ENCODE measurements at regions of chr20 and their contacts with region 1.

Region 1: DNA sequence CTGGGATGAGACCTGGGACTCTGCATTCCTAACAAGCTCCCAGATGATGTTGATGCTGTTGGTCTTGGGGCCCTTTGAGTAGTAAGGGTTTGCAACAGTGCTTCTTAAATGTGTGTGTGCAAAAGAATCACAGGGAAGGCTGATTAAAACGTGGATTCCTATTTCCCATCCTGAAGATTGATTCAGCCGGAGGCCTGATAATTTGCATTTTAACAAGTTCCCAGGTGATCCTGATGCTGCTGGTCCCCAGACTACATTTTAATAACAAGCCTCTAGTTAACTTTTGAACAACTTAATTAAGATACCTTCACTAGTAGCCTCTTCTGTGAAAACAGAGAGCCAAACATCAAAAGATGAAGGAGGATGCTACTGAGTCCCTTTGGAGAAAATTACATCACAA is 156.4 kb upstream of the LAMP5 start:
- DNase-seq: no peak
- H3K27ac ChIP-seq: no peak overlapping the region
- CTCF ChIP-seq: no peak

Region 2: GRCh38 chr20:8853805-8854338 is 504.1 kb before region 1 on chr20:
- CTCF ChIA-PET with region 1: interaction called, 11 read pairs
- POLR2A ChIA-PET with region 1: no interaction called
- DNase-seq: peak; percentile 78
- H3K27ac ChIP-seq: no peak overlapping the region
- CTCF ChIP-seq: peak; percentile 96

Region 3: DNA sequence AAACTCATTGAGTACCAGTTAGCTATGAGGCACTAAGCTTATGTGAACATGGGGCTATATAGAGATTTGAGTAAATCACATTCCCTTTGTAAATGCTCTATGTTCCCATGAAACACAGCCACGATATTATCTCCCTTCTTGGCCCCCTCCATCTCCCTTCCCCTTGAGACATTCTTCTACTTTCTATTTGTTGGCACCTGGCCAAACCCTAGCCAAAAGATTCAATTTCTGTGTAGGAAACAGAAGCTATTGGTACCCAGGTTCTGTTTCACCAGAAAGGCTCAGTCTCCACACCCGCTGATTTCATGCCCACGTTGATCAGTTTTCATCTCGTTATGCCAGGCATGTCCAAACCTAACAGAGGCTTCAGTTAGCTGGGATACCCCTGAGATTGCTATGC is 10.9 kb after region 1 on chr20:
- CTCF ChIA-PET with region 1: no interaction called
- POLR2A ChIA-PET with region 1: no interaction called
- DNase-seq: no peak
- H3K27ac ChIP-seq: no peak overlapping the region
- CTCF ChIP-seq: no peak